ENCODE measurements at regions of chr20 and their contacts with region 1.

Region 1: DNA sequence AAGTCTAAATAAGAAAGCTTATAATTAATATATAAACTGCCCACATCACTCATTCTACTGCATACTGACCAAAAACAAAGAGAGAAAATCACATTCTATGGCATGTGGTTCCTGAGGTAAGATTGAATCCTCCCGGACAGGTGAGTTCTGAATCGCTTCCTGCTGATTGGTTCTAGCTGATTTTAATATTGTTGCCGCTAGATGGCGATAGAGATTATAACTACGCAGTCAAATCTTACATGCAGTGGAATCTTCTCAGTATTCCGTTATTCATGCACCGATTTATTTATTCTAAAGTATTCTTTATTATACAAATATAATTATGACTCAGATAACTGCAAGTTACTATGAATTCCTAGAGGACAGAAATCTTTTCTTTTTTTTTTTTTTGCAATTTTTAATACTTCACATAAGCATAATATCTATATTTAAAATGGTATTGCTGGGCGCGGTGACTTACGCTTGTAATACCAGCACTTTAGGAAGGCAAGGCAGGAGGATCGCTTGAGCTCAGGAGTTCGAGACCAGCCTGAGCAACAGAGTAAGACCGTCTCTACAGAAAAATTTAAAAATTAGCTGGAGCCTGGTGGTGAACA is 24.2 kb upstream of the TMX4 start:
- DNase-seq: peak; percentile 37 to 70 (median 67)
- H3K4me3 ChIP-seq: no peak overlapping the region
- H3K4me3 Mint-ChIP-seq: peak overlapping the region in 1 of 8 donors; percentile 61
- H3K27ac ChIP-seq: no peak overlapping the region
- H3K27ac Mint-ChIP-seq: no peak overlapping the region
- H3K4me1 ChIP-seq: no peaks in the 10 kb centered on the region
- H3K4me1 Mint-ChIP-seq: peaks cover 0 to 4% (median 3%) of the 10 kb centered on the region in 4 donors
- H3K27me3 ChIP-seq: no peaks in the 10 kb centered on the region
- H3K27me3 Mint-ChIP-seq: peaks cover 9 to 11% of the 10 kb centered on the region in 2 donors

Region 2: GRCh38 chr20:7989379-7989778 is 54.4 kb before region 1 on chr20:
- CTCF ChIA-PET with region 1: no interaction called
- POLR2A ChIA-PET with region 1: no interaction called
- intact Hi-C with region 1: no loop called
- DNase-seq: no peak
- H3K4me3 ChIP-seq: no peak overlapping the region
- H3K4me3 Mint-ChIP-seq: no peak overlapping the region
- H3K27ac ChIP-seq: no peak overlapping the region
- H3K27ac Mint-ChIP-seq: no peak overlapping the region
- H3K4me1 ChIP-seq: no peaks in the 10 kb centered on the region
- H3K4me1 Mint-ChIP-seq: peaks cover 0 to 5% (median 2%) of the 10 kb centered on the region in 4 donors
- H3K27me3 ChIP-seq: no peaks in the 10 kb centered on the region
- H3K27me3 Mint-ChIP-seq: no peaks in the 10 kb centered on the region

Region 3: GRCh38 chr20:8019246-8019997 is 24.4 kb before region 1 on chr20 and contains the start of gene TMX4:
- CTCF ChIA-PET with region 1: interaction called, 17 read pairs
- POLR2A ChIA-PET with region 1: interaction called, 13 read pairs
- intact Hi-C with region 1: loop called (anchors 1 kb)
- DNase-seq: peak; percentile 86 to 93 (median 88)
- H3K4me3 ChIP-seq: peak within 1 kb of the TSS; percentile 62 to 88
- H3K4me3 Mint-ChIP-seq: peak within 1 kb of the TSS in 7 of 8 donors; percentile 88 to 96 (median 93)
- H3K27ac ChIP-seq: peak within 1 kb of the TSS; percentile 82
- H3K27ac Mint-ChIP-seq: peak within 1 kb of the TSS; percentile 84 to 97 (median 91)
- H3K4me1 ChIP-seq: peaks cover 57% of the 10 kb centered on the region
- H3K4me1 Mint-ChIP-seq: peaks cover 25 to 42% (median 32%) of the 10 kb centered on the region in 4 donors
- H3K27me3 ChIP-seq: no peaks in the 10 kb centered on the region
- H3K27me3 Mint-ChIP-seq: no peaks in the 10 kb centered on the region
- total RNA-seq, gene TMX4: 71.6 to 74.6 TPM

Region 4: GRCh38 chr20:8055096-8055495 is 11.3 kb after region 1 on chr20:
- CTCF ChIA-PET with region 1: interaction called, 24 read pairs
- POLR2A ChIA-PET with region 1: no interaction called
- intact Hi-C with region 1: no loop called
- DNase-seq: no peak
- H3K4me3 ChIP-seq: no peak overlapping the region
- H3K4me3 Mint-ChIP-seq: no peak overlapping the region
- H3K27ac ChIP-seq: no peak overlapping the region
- H3K27ac Mint-ChIP-seq: no peak overlapping the region
- H3K4me1 ChIP-seq: no peaks in the 10 kb centered on the region
- H3K4me1 Mint-ChIP-seq: peaks cover 0 to 3% (median 0%) of the 10 kb centered on the region in 4 donors
- H3K27me3 ChIP-seq: no peaks in the 10 kb centered on the region
- H3K27me3 Mint-ChIP-seq: no peaks in the 10 kb centered on the region

Region 5: GRCh38 chr20:8089668-8090067 is 45.9 kb after region 1 on chr20:
- CTCF ChIA-PET with region 1: no interaction called
- POLR2A ChIA-PET with region 1: no interaction called
- intact Hi-C with region 1: no loop called
- DNase-seq: no peak
- H3K4me3 ChIP-seq: no peak overlapping the region
- H3K4me3 Mint-ChIP-seq: no peak overlapping the region
- H3K27ac ChIP-seq: no peak overlapping the region
- H3K27ac Mint-ChIP-seq: no peak overlapping the region
- H3K4me1 ChIP-seq: no peaks in the 10 kb centered on the region
- H3K4me1 Mint-ChIP-seq: no peaks in the 10 kb centered on the region
- H3K27me3 ChIP-seq: no peaks in the 10 kb centered on the region
- H3K27me3 Mint-ChIP-seq: peaks cover 4 to 17% of the 10 kb centered on the region in 2 donors

Region 6: DNA sequence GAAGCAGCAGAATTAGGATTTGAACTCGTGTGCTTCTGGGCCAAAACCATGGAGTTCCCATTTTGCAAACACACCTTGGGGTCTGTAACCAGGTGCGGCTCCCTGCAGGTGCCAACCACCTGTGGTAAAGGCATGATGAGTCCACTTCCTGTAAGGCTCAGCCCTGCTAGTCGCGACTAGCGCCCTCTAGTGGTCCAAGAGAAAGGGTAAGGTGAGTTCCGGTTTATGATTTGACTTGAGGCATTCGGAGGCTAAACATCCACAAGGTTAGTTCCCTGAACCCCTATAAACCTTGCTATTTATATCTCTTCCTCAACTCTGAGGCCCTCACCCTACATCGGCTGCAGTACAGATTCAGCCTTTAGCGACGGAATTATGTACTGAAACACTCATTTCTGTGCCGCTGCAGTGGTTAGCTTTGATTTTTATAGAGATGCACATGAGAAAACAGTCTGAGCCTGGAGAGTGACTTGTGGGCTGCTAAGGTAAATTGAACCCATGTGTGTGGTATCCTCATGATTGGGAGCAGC is 261.7 kb after region 1 on chr20:
- CTCF ChIA-PET with region 1: interaction called, 5 read pairs
- POLR2A ChIA-PET with region 1: no interaction called
- intact Hi-C with region 1: loop called (anchors 1 kb)
- DNase-seq: peak; percentile 71 to 79 (median 73)
- H3K4me3 ChIP-seq: no peak overlapping the region
- H3K4me3 Mint-ChIP-seq: peak overlapping the region in 3 of 8 donors; percentile 1 to 31 (median 13)
- H3K27ac ChIP-seq: no peak overlapping the region
- H3K27ac Mint-ChIP-seq: peak overlapping the region in 5 of 7 donors; percentile 3 to 67 (median 47)
- H3K4me1 ChIP-seq: no peaks in the 10 kb centered on the region
- H3K4me1 Mint-ChIP-seq: peaks cover 3 to 12% (median 7%) of the 10 kb centered on the region in 4 donors
- H3K27me3 ChIP-seq: no peaks in the 10 kb centered on the region
- H3K27me3 Mint-ChIP-seq: no peaks in the 10 kb centered on the region

Region 7: DNA sequence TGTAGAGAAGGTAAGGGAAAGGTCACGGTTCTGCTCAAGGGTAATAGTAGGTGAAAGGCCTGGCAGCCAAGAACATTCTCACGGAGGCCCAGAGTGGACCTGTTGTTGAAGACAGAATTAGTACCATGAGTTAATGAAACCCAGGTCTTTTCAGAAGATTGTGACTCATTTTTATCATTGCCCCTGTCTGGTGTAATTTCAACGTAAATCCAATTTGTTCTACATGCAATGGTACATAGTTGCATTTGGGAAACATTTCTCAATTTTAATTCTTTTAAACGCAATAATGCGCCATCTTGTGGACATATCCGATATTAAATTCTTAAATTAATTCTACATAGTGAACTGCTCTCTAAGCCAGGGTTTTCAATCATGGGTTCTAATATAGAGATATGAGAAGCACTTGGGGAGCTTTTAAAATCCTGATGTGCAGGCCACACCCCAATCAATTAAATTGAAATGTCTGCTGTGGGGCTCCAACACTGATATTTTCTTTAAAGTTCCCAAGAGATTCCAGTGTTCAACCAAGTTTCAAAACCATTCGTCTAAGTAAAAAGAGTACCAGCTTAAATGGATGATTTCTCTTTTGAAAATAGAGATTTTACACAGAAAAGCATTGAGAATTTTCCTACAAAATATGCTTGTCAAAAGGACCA is 345.7 kb after region 1 on chr20:
- CTCF ChIA-PET with region 1: interaction called, 101 read pairs
- POLR2A ChIA-PET with region 1: no interaction called
- intact Hi-C with region 1: loop called (anchors 1 kb)
- DNase-seq: peak in 4 of 5 donors; percentile 29 to 37 (median 32)
- H3K4me3 ChIP-seq: no peak overlapping the region
- H3K4me3 Mint-ChIP-seq: no peak overlapping the region
- H3K27ac ChIP-seq: no peak overlapping the region
- H3K27ac Mint-ChIP-seq: no peak overlapping the region
- H3K4me1 ChIP-seq: no peaks in the 10 kb centered on the region
- H3K4me1 Mint-ChIP-seq: peaks cover 9 to 18% (median 12%) of the 10 kb centered on the region in 4 donors
- H3K27me3 ChIP-seq: no peaks in the 10 kb centered on the region
- H3K27me3 Mint-ChIP-seq: peaks cover 0 to 1% of the 10 kb centered on the region in 2 donors

Region 8: GRCh38 chr20:8535403-8536261 is 491.8 kb after region 1 on chr20:
- CTCF ChIA-PET with region 1: interaction called, 3 read pairs
- POLR2A ChIA-PET with region 1: no interaction called
- intact Hi-C with region 1: loop called (anchors 5 kb)
- DNase-seq: no peak
- H3K4me3 ChIP-seq: no peak overlapping the region
- H3K4me3 Mint-ChIP-seq: no peak overlapping the region
- H3K27ac ChIP-seq: no peak overlapping the region
- H3K27ac Mint-ChIP-seq: no peak overlapping the region
- H3K4me1 ChIP-seq: no peaks in the 10 kb centered on the region
- H3K4me1 Mint-ChIP-seq: no peaks in the 10 kb centered on the region
- H3K27me3 ChIP-seq: no peaks in the 10 kb centered on the region
- H3K27me3 Mint-ChIP-seq: no peaks in the 10 kb centered on the region

Region 9: GRCh38 chr20:8616792-8617191 is 573.0 kb after region 1 on chr20:
- CTCF ChIA-PET with region 1: no interaction called
- POLR2A ChIA-PET with region 1: no interaction called
- intact Hi-C with region 1: no loop called
- DNase-seq: no peak
- H3K4me3 ChIP-seq: no peak overlapping the region
- H3K4me3 Mint-ChIP-seq: no peak overlapping the region
- H3K27ac ChIP-seq: no peak overlapping the region
- H3K27ac Mint-ChIP-seq: no peak overlapping the region
- H3K4me1 ChIP-seq: no peaks in the 10 kb centered on the region
- H3K4me1 Mint-ChIP-seq: no peaks in the 10 kb centered on the region
- H3K27me3 ChIP-seq: no peaks in the 10 kb centered on the region
- H3K27me3 Mint-ChIP-seq: no peaks in the 10 kb centered on the region